ENCODE measurements at regions of chr2 and their contacts with region 1.

Region 1: DNA sequence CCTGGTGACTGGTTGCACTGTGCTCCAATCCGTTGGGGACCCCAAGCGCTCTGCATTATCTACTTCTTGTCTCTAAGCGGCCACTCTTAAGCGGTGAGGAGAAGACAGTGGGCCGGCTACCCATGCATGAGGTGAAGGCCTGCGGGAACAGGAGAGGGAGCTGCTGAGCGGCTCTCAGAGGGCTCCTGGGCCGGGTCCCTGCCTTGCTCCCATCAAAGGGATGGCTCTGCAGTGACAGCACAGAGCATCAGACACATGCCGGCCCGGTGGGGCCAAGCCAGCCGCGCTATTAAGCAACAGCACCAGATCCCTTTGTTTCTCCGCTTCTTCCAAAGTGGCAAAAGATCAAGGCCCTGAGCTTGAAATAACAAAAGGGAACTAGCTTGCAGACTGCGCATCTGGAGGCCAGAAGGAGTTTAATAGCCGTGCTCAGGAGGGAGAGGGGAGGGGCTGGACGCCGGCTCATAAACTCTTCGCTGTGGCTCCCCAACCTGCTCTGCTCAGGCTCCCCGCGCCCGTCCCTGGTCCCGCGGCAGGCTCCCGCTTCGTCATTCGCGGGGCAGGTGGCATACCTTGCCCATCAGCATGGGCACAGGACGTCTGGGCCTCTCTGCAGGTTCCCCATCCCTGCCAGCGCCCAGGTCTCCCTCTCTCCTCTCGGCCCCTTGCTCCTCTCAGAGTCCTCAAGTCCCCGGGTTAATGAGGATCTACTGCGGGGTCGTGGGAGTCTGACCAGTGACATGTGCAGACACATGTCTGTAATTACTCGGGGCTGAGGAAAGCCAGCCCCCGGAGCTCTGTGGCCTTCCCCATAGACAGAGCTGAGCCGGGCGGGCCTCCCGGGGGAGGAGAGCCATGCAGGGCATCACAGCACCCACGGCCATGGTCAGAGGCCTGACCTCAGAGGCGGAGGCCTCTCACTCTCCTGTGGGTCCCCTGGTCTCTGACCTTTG is 96.7 kb downstream of the ASB1 start:
- DNase-seq: peak; percentile 12 to 54
- ATAC-seq: peak; percentile 36

Region 2: GRCh38 chr2:238784671-238785527 is 261.5 kb after region 1 on chr2:
- intact Hi-C with region 1: loop called in 1 of 2 experiments (anchors 10 kb)
- DNase-seq: peak in 1 of 2 donors; percentile 64
- ATAC-seq: peak; percentile 66

Measured in left colon (tissue), 2 donors.